Activated B cell treated with CpG ODN at 0.5 μM for 24 hours (primary cell): ENCODE measurements at regions of chr12 and their contacts with region 1.

Region 1: GRCh38 chr12:11581179-11581755 is 68.2 kb upstream of the ETV6 start:
- DNase-seq: no peak
- ATAC-seq: no peak
- H3K4me3 Mint-ChIP-seq: no peak overlapping the region
- H3K27ac Mint-ChIP-seq: no peak overlapping the region
- H3K4me1 Mint-ChIP-seq: peaks cover 11% of the 10 kb centered on the region
- H3K27me3 Mint-ChIP-seq: peaks cover 2% of the 10 kb centered on the region
- CTCF ChIP-seq: peak; percentile 40

Region 2: GRCh38 chr12:11553871-11554533 is 27.3 kb before region 1 on chr12:
- CTCF ChIA-PET with region 1: interaction called, 13 read pairs
- POLR2A ChIA-PET with region 1: no interaction called
- intact Hi-C with region 1: loop called (anchors 1 kb)
- DNase-seq: no peak
- ATAC-seq: peak; percentile 79
- H3K4me3 Mint-ChIP-seq: no peak overlapping the region
- H3K27ac Mint-ChIP-seq: no peak overlapping the region
- H3K4me1 Mint-ChIP-seq: peaks cover 5% of the 10 kb centered on the region
- H3K27me3 Mint-ChIP-seq: peaks cover 5% of the 10 kb centered on the region
- CTCF ChIP-seq: peak; percentile 19

Region 3: DNA sequence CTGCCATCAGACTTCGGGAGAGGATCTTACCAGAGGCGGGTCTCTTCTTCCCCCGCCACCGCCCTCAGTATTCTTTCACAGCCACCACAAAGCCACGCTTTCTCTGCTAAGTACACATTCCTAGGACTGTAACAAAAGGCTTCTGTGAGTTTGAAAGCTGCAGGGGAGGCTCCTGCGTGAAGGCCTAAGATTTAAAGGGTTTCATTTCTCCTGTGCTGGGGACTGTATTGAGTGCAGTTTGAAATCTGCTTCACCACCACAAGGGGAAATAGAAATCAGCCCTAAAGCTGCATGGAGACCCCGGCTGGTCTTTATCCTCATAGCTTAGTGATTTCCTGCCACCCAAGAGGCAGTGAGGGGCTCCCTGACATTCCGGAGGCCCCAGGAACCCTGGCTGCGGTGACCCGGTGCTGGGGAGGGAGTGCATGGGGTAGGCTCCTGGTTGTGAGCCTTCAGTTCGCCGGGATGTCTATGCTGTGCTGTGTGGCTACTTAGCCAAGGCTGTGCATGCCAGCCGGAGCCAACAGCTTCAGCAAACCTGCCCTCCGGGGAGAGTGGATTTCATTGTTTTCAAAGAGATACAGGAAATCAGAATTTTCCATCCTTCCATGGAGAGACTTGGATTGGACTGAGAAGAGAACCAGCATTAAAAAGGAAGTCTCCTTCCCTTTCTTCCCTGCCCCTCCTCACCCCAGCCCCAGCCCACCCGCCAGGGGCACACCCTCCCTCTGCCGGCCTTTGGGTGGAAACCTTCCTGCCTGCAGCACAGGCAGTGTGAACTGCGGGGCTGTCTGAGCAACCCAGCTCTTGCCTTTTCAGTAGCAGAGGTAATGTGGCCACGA is 231.5 kb after region 1 on chr12:
- CTCF ChIA-PET with region 1: interaction called, 3 read pairs
- POLR2A ChIA-PET with region 1: no interaction called
- intact Hi-C with region 1: loop called (anchors 2 kb)
- DNase-seq: peak; percentile 32
- ATAC-seq: peak; percentile 83
- H3K4me3 Mint-ChIP-seq: peak overlapping the region; percentile 65
- H3K27ac Mint-ChIP-seq: peak overlapping the region; percentile 87
- H3K4me1 Mint-ChIP-seq: peaks cover 66% of the 10 kb centered on the region
- H3K27me3 Mint-ChIP-seq: no peaks in the 10 kb centered on the region
- CTCF ChIP-seq: no peak

Region 4: DNA sequence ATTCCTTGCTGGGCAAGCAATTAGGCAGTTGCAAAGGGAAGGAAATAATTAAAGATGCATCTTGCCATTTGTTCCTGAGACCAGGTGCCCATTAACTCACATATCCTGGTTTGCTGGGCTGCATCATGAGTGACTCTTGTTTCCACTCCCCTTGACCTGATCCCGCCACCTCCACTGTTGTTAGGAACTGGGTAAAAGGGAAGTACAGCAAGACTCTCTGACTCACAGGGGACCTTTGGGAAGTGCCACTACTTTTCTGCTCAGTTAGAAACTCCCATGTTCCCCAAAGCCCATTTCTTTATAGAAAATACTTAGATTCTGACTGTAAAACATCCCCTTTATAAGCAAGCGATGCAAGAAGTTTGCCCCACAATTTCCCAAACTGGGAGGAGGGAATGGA is 303.4 kb after region 1 on chr12:
- CTCF ChIA-PET with region 1: no interaction called
- POLR2A ChIA-PET with region 1: no interaction called
- intact Hi-C with region 1: loop called (anchors 5 kb)
- DNase-seq: no peak
- ATAC-seq: no peak
- H3K4me3 Mint-ChIP-seq: no peak overlapping the region
- H3K27ac Mint-ChIP-seq: no peak overlapping the region
- H3K4me1 Mint-ChIP-seq: peaks cover 33% of the 10 kb centered on the region
- H3K27me3 Mint-ChIP-seq: no peaks in the 10 kb centered on the region
- CTCF ChIP-seq: no peak

Region 5: DNA sequence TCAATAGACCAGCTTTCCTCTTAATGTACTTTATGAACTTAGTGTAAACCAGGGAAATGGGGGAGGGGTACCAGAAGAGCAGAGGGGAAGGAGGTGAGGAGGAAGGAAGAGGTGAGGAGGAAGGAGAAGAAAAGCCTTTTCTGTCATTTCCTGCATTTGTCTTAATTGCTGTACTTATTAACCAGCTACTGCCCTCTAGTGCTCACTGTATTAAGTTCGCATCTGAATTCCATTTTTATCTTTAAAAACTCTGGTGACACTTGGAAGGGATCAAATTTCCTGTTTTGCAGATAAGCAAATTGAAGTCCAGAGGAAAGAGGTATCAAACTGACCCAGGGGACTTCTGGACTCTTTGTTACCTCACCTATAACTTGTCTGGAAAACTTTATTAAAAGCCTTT is 746.5 kb after region 1 on chr12:
- CTCF ChIA-PET with region 1: interaction called, 33 read pairs
- POLR2A ChIA-PET with region 1: no interaction called
- intact Hi-C with region 1: loop called (anchors 1 kb)
- DNase-seq: no peak
- ATAC-seq: peak; percentile 31
- H3K4me3 Mint-ChIP-seq: no peak overlapping the region
- H3K27ac Mint-ChIP-seq: no peak overlapping the region
- H3K4me1 Mint-ChIP-seq: peaks cover 2% of the 10 kb centered on the region
- H3K27me3 Mint-ChIP-seq: peaks cover 2% of the 10 kb centered on the region
- CTCF ChIP-seq: no peak

Region 6: GRCh38 chr12:12334367-12335040 is 753.2 kb after region 1 on chr12:
- CTCF ChIA-PET with region 1: interaction called, 33 read pairs
- POLR2A ChIA-PET with region 1: no interaction called
- intact Hi-C with region 1: loop called (anchors 1 kb)
- DNase-seq: peak; percentile 41
- ATAC-seq: peak; percentile 72
- H3K4me3 Mint-ChIP-seq: no peak overlapping the region
- H3K27ac Mint-ChIP-seq: no peak overlapping the region
- H3K4me1 Mint-ChIP-seq: peaks cover 9% of the 10 kb centered on the region
- H3K27me3 Mint-ChIP-seq: peaks cover 2% of the 10 kb centered on the region
- CTCF ChIP-seq: peak; percentile 58